ENCODE measurements at regions of chr12 and their contacts with region 1.

Region 1: GRCh38 chr12:22684140-22685118 is 59.5 kb downstream of the ETNK1 start:
- DNase-seq: peak; percentile 59
- ATAC-seq: peak; percentile 67; the same call in 1 of the 2 replicates
- H3K4me3 ChIP-seq: no peak overlapping the region
- H3K27ac ChIP-seq: no peak overlapping the region
- H3K4me1 ChIP-seq: no peaks in the 10 kb centered on the region
- H3K27me3 ChIP-seq: no peaks in the 10 kb centered on the region
- CTCF ChIP-seq: peak; percentile 54
- POLR2A ChIP-seq: no peak
- RAD21 ChIP-seq: peak; percentile 41

Region 2: DNA sequence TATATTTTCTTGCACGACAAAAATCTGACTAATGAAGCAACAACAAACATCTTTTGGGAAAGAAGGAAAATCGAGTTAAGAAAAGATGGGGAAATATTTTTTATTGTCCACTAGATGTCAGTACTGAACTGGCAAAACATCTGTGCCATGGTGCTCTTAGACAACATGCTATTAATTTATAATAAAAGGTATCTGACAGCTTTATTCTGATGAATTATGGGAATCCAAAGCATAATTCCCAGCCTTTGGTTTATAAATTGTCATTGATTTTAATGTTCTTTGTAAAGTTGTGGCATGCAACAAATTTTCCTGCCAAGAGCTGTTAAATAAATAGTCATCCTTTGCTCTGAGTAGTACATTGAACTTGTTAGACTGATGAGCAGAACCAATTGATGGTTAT is 171.7 kb after region 1 on chr12:
- CTCF ChIA-PET with region 1: no interaction called
- POLR2A ChIA-PET with region 1: interaction called, 32 read pairs
- dilution Hi-C with region 1: no loop called
- in situ Hi-C with region 1: no loop called
- intact Hi-C with region 1: loop called (anchors 10 kb)
- DNase-seq: peak; percentile 45
- ATAC-seq: 0 out of 2 replicates have a peak, but pooled peaks have one; percentile 27
- H3K4me3 ChIP-seq: no peak overlapping the region
- H3K27ac ChIP-seq: no peak overlapping the region
- H3K4me1 ChIP-seq: no peaks in the 10 kb centered on the region
- H3K27me3 ChIP-seq: peaks cover 12% of the 10 kb centered on the region
- CTCF ChIP-seq: peak; percentile 70
- POLR2A ChIP-seq: no peak
- RAD21 ChIP-seq: peak; percentile 86

Region 3: DNA sequence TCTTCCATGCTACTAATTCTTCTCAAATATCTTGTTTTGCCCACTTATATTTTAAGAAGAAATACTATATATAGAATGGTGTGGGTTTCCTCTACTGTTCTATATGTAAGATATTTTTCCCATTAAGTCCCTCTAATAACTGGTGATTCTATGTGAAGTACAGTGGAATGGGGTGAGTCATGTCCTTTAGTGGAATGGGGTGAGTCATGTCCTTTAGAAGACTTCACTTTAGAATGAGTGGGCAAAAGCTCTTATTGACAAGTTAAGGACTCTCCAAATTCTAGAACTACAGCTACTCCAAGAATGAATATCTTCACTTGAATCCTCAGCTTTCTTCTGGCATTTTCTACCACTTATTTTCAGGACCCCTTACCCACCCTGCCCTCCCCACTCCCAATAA is 290.4 kb after region 1 on chr12:
- CTCF ChIA-PET with region 1: no interaction called
- POLR2A ChIA-PET with region 1: no interaction called
- dilution Hi-C with region 1: no loop called
- in situ Hi-C with region 1: no loop called
- intact Hi-C with region 1: loop called (anchors 5 kb)
- DNase-seq: peak; percentile 94
- ATAC-seq: peak; percentile 72
- H3K4me3 ChIP-seq: no peak overlapping the region
- H3K27ac ChIP-seq: no peak overlapping the region
- H3K4me1 ChIP-seq: peaks cover 2% of the 10 kb centered on the region; the same call in 1 of the 2 replicates
- H3K27me3 ChIP-seq: no peaks in the 10 kb centered on the region
- CTCF ChIP-seq: no peak
- POLR2A ChIP-seq: no peak
- RAD21 ChIP-seq: no peak

Region 4: DNA sequence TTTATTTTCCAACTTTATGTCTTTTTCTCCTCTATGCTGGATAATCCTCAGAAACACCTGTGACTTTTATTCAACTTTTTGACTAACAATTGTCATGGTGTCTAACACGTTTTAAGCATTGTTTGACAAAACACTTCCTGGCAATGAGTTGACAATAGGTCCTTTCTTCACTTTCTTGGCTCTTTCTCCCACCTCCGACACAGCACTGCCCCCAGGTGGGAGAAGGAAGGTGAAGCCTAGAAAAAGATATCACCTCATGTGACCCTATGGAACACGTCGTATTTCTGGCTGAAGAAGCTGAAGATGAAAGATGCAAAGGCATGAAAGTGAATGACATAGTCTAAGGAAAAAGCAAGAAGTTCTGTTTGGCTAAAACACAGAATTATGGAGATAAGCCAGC is 370.6 kb after region 1 on chr12:
- CTCF ChIA-PET with region 1: no interaction called
- POLR2A ChIA-PET with region 1: no interaction called
- dilution Hi-C with region 1: no loop called
- in situ Hi-C with region 1: no loop called
- intact Hi-C with region 1: loop called (anchors 10 kb)
- DNase-seq: peak; percentile 7
- ATAC-seq: no peak; the same call in 1 of the 2 replicates
- H3K4me3 ChIP-seq: no peak overlapping the region
- H3K27ac ChIP-seq: no peak overlapping the region
- H3K4me1 ChIP-seq: no peaks in the 10 kb centered on the region
- H3K27me3 ChIP-seq: no peaks in the 10 kb centered on the region
- CTCF ChIP-seq: peak; percentile 49
- POLR2A ChIP-seq: no peak
- RAD21 ChIP-seq: peak; percentile 73

Measured in IMR-90 (cell line).